ENCODE measurements at regions of chr5 and their contacts with region 1.

Region 1: DNA sequence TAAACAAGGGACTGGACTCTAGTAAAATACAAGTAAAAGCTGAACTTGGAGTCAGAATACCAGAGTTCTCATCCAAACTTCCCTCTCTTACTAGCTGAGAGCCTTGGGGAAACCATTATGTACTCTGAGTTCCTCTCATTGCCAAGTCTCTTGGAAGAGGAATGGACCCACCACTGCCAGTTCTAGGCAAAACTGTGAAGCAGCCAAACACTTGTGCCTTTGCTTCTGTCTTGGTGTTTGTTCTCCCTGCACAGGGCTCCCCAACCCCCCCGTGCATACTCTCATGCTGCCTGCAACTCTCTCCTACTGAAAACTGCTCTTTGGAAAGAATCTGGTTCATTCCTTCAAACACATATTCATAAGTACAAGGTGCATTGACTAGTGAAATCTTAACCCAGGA is 102.6 kb downstream of the PDZD2 start:
- DNase-seq: no peak
- H3K4me3 ChIP-seq: no peak overlapping the region
- H3K27ac ChIP-seq: no peak overlapping the region
- H3K4me1 ChIP-seq: no peaks in the 10 kb centered on the region
- H3K27me3 ChIP-seq: no peaks in the 10 kb centered on the region
- CTCF ChIP-seq: no peak
- POLR2A ChIP-seq: no peak

Region 2: DNA sequence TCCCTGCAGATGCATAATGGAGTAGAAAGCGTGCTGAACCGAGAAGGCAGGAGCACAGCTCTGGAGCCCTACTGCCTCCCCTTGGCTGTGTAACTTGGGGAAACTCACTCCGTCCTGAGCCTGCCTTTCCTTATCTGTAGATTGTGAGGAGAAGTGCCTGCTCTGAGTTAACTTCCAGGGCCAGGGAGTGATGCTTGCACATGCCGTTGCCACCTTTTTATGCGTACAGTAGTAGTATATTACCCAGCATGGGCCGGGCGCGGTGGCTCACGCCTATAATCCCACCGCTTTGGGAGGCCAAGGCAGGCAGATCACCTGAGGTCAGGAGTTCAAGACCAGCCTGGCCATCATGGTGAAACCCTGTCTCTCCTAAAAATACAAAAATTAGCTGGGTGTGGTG is 15.5 kb before region 1 on chr5:
- intact Hi-C with region 1: loop called (anchors 1 kb)
- DNase-seq: no peak
- H3K4me3 ChIP-seq: no peak overlapping the region
- H3K27ac ChIP-seq: no peak overlapping the region
- H3K4me1 ChIP-seq: no peaks in the 10 kb centered on the region
- H3K27me3 ChIP-seq: no peaks in the 10 kb centered on the region
- CTCF ChIP-seq: no peak
- POLR2A ChIP-seq: no peak

Region 3: DNA sequence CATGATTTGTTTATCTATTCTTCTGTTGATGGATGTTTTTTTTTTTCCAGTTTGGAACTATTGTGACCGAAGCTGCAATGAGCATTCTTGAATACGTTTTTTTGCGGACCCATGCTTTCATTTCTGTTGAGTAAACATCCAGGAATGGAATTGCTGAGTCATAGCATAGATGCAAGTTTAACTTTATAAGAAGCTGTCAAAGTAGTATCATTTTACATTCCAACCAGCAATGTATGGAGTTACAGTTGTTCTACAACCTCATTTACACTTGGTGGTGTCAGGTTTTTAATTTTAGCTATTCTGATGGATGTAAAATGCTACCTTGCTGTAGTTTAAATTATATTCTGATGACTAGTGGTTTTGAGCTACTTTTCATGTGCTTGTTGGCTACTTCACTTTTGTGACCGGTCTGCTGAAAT is 1018.6 kb after region 1 on chr5:
- intact Hi-C with region 1: no loop called
- DNase-seq: no peak
- H3K4me3 ChIP-seq: no peak overlapping the region
- H3K27ac ChIP-seq: no peak overlapping the region
- H3K4me1 ChIP-seq: no peaks in the 10 kb centered on the region
- H3K27me3 ChIP-seq: peaks cover 0 to 2% of the 10 kb centered on the region in 2 donors
- CTCF ChIP-seq: no peak
- POLR2A ChIP-seq: no peak

Measured in breast epithelium (tissue), 4 donors.